ENCODE measurements at regions of chr1 and their contacts with region 1.

Region 1: DNA sequence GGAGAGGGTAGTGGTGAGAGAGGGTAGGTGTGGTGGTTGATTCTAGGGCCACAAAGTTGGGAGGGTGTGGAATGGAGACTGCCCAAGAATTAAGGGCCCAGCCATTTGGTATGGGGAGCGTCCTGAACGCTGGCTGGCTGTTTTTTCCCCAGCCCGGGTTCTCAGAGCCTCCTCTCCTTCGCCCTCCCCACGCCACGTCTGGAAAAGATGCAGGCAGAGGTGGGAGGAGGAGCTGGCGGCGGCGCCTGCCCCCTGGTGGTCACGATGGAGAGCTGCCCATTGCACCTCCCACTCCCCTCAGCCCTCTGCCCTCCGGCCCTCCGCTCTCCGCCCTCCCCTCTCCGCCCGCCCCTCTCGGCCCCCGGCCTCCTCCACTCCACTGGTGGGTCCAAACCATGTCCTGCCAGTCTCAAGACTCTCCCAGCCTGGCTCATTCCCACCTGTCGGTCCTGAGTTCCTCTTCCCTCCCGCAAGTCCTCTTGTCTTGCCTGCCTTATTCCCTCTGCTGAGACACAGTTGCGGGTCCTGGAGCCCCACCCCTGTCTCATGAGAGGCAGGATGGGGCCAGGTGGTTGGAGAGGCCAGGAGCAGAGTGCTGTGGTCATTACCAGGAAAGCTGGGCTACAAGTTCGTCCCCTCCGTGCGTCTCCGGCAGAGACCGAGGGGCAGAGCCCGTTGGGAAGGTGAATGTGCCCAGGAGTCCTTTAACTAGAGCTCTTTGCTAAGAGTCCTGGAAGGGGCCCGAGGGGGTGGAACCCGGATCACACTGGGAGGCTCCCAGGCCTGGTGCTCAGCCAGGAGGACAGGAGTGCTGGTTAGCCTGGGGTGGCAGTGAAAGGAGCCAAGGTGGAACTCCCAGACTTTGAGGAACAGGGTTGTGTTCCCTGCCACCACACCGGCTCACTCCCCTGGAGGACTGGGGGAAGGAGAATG is 22.6 kb downstream of the ETNK2 start:
- DNase-seq: peak; percentile 67

Region 2: DNA sequence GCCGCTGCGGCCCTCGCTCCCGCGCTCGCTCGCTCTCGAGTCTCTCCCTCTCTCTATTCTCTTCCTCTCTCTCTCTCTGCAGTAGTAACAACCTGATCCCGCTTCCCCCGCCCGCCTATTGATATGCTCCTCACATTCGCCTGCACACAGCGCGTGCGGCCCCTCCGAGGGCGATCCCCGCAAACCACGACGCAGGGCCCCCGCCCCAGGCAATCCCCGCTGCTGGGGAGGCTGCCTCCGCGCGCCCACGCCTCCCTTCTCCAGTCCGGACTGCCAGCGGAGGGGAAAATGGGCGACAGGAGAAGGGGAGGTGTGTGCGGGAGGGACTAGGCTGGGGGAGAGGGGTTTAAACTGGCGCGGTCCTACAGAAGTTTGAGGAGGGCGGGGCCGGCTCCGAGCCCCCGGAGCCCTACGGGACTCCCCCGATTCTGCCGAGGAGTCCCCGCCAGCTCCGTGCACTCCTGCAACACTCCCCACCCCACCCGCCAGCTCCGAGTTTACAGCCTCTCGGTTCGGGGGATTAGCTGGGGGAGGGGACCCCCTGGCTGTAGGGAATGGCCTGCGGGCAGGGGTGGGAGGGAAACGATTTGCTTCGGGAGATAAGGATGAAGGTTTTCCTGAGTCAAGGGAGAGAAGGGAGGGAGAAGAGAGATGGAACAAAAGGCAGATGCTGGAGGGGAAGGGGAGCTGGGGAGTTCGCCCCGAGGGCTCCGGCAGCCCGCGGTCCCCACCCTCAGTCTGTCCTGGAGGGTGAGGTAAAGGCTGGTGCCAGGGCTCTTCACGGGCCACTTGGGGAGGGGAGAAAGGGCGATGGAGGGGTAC is 1485.6 kb before region 1 on chr1:
- in situ Hi-C with region 1: no loop called
- DNase-seq: no peak

Region 3: DNA sequence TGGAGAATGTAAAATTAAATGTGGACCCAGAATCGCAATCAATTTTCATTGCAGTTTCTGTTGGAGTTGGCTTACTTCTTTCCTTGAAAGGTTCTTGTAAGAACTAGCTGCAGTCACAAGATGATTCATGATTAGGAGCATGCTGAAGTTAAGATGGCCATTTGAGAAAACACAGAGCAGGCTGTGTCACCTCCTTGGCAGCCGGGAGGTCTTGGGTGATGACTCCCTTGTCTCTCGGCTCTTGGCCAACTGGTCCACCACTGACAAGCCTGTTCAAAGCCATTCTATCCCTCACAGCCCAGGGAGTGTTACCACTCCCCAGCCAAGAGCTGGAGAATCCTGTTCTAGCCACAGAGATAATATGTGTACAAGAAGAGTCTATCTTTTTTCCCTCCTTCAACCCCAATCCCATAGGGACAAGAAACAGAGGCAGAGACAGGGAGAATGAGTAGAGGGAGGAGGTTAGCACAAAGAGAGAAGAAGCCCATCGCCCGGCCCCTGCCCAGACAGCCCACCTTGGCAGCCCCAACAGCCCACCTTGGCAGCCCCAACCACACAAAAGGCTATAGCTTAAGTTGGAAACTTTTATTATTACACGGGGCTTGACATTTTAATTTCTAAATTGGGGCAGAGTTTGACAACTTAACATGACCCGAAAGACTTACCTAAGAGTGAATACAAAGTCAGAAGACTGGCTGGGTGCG is 594.6 kb before region 1 on chr1:
- in situ Hi-C with region 1: no loop called
- DNase-seq: no peak

Region 4: DNA sequence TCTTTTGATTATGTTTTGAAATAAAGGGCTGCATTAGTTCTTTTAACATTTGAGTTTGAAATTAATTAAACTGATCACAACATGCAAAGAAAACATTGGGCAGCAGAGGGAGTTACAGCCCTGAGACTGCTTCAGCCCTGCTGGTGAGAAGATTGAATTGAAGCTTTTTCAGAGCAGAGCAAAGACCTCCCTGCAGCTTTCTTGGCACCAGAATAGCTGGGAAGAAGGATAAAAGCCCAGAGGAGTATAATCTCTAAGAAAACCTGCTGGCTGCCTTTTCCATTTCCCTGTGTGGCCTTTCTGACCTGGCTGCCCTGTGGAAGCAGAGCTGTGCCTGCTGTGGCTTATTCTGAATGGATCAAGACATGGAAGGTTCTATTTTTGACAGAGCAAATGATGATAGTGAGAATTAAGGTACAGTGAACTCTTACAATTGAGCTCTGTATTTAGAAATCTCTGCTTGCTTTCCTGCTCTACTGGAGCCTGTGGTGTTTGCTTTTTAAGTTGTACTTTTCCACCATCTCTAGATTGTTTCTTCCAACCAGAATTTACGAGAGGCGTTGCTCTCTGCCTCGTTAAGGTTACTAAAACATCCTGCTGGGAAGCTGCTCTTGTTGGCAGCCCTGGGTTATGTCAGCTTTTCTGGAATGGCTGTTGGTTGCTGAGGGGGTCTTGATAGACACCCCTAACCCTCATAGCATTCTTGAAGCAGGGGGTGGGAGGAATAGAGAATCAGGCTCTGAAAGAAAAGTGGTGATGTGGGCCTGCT is 257.9 kb before region 1 on chr1:
- in situ Hi-C with region 1: loop called (anchors 10 kb)
- DNase-seq: peak; percentile 55

Region 5: DNA sequence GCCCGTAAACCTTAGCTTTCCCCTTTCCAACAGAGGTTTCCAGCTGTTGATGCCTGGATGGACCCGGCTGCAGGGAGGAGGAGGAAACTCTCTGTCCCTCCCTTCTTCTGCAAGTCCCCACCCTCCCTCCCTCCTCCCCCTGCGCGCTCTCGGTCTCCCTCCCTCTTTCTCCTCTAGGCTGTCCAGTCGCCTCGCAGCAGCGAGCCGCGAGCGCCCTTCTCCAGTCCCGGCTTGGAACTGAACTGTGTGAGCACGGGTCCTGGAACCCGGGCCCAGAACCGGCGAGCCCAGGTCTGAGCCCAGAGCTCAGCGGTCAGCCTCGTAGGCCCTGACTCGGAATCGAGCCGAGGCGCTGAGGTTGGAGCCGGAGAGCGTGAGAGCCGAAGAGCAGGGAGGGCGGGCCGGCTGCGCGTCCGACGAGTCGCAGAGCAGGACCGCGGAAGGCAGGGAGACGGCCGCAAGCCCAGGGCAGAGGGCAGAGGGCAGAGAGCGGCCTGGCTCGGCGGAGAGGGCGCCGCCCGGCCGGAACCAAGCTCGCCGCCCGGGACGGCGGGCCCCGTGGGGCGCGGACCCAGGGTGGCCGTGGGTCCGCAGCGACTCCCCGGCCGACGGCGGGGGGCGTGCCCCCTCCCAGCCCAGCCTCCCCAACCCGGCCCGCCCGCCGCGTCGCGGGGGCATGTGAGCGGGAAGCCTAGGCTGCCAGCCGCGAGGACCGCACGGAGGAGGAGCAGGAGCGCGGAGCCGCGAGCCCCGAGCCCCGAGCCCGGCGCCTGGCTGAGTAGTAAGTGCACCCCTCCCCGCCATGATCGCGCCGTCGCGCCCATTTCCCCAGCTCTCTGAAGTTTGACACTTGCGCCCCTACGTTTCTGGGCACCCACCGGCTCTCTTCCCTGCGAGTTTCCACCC is 56.0 kb before region 1 on chr1 and contains the start of gene SOX13:
- in situ Hi-C with region 1: no loop called
- DNase-seq: no peak

Region 6: DNA sequence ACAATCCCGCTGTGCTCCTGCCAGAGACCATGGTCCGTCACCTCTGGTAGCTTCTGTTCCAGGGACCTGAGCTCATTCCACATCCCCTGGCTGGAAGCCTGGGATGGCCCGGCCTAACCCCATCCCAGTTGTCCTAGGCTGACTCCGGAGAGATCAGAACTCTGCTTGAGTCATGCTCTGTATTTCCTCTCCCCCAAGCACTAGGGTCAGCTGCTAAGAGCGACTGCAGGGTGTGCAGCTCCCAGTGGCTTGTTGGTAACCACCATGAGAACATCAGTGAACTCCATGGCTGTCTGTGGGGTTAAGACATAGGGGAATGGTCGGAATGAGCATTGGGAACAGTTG is 121.4 kb after region 1 on chr1:
- in situ Hi-C with region 1: no loop called
- DNase-seq: no peak

Measured in KBM-7 (cell line).